H1 (cell line): ENCODE measurements at regions of chr3 and their contacts with region 1.

Region 1: GRCh38 chr3:9932843-9933560 is 632 bp upstream of the CRELD1 start:
- DNase-seq: peak in 1 of 2 experiments; percentile 91
- H3K4me3 ChIP-seq: peak overlapping the region; percentile 37 to 78 (median 68)
- H3K27ac ChIP-seq: no peak overlapping the region
- H3K4me1 ChIP-seq: peaks cover 0 to 10% (median 5%) of the 10 kb centered on the region in 4 experiments; a peak in 6 of 7 replicates
- H3K27me3 ChIP-seq: peaks cover 0 to 3% (median 0%) of the 10 kb centered on the region in 4 experiments; a peak in 1 of 7 replicates
- CTCF ChIP-seq: peak; percentile 67 to 72 (median 68)
- EP300 ChIP-seq: no peak
- POLR2A ChIP-seq: peak in 1 of 2 experiments; percentile 22; a peak in 1 of 3 replicates
- RAD21 ChIP-seq: peak; percentile 53 to 71

Region 2: GRCh38 chr3:9183811-9184460 is 749.1 kb before region 1 on chr3:
- CTCF ChIA-PET with region 1: no interaction called
- POLR2A ChIA-PET with region 1: no interaction called
- DNase-seq: peak; percentile 29 to 62
- H3K4me3 ChIP-seq: peak overlapping the region in 1 of 4 experiments; percentile 16; a peak in 1 of 8 replicates
- H3K27ac ChIP-seq: no peak overlapping the region
- H3K4me1 ChIP-seq: peaks cover 2 to 15% (median 11%) of the 10 kb centered on the region in 4 experiments; a peak in 5 of 7 replicates
- H3K27me3 ChIP-seq: no peaks in the 10 kb centered on the region
- CTCF ChIP-seq: no peak
- EP300 ChIP-seq: no peak
- POLR2A ChIP-seq: no peak
- RAD21 ChIP-seq: peak in 1 of 2 experiments; percentile 16; a peak in 1 of 4 replicates

Region 3: GRCh38 chr3:9826815-9827567 is 106.0 kb before region 1 on chr3:
- CTCF ChIA-PET with region 1: interaction called, 20 read pairs
- POLR2A ChIA-PET with region 1: no interaction called
- DNase-seq: peak in 1 of 2 experiments; percentile 74
- H3K4me3 ChIP-seq: no peak overlapping the region
- H3K27ac ChIP-seq: no peak overlapping the region
- H3K4me1 ChIP-seq: peaks cover 0 to 5% (median 2%) of the 10 kb centered on the region in 4 experiments; a peak in 2 of 7 replicates
- H3K27me3 ChIP-seq: no peaks in the 10 kb centered on the region; a peak in 1 of 7 replicates
- CTCF ChIP-seq: peak; percentile 55 to 72 (median 72)
- EP300 ChIP-seq: no peak
- POLR2A ChIP-seq: no peak
- RAD21 ChIP-seq: peak; percentile 67 to 76

Region 4: GRCh38 chr3:9890249-9891071 is 42.5 kb before region 1 on chr3 and contains the start of gene JAGN1:
- CTCF ChIA-PET with region 1: interaction called, 10 read pairs
- POLR2A ChIA-PET with region 1: interaction called, 5 read pairs
- DNase-seq: peak; percentile 64 to 97
- H3K4me3 ChIP-seq: peak within 1 kb of the TSS; percentile 88 to 98 (median 90)
- H3K27ac ChIP-seq: peak within 1 kb of the TSS; percentile 89
- H3K4me1 ChIP-seq: peaks cover 0 to 2% (median 0%) of the 10 kb centered on the region in 4 experiments; a peak in 1 of 7 replicates
- H3K27me3 ChIP-seq: no peaks in the 10 kb centered on the region
- CTCF ChIP-seq: no peak
- EP300 ChIP-seq: no peak
- POLR2A ChIP-seq: peak; percentile 92 to 95
- RAD21 ChIP-seq: no peak
- total RNA-seq, gene JAGN1: 26.8 and 26.9 TPM in 2 replicates

Region 5: GRCh38 chr3:9946112-9947024 is 13.4 kb after region 1 on chr3:
- CTCF ChIA-PET with region 1: interaction called, 86 read pairs
- POLR2A ChIA-PET with region 1: interaction called, 43 read pairs
- DNase-seq: peak; percentile 70 to 89
- H3K4me3 ChIP-seq: peak overlapping the region; percentile 42 to 69 (median 51)
- H3K27ac ChIP-seq: no peak overlapping the region
- H3K4me1 ChIP-seq: peaks cover 0 to 8% (median 4%) of the 10 kb centered on the region in 4 experiments; a peak in 5 of 7 replicates
- H3K27me3 ChIP-seq: no peaks in the 10 kb centered on the region
- CTCF ChIP-seq: peak in 2 of 3 experiments; percentile 89 to 92; a peak in 3 of 4 replicates
- EP300 ChIP-seq: peak in 1 of 2 experiments; percentile 71; a peak in 1 of 3 replicates
- POLR2A ChIP-seq: peak in 1 of 2 experiments; percentile 69; a peak in 2 of 3 replicates
- RAD21 ChIP-seq: peak; percentile 70 to 78